Calu3 (cell line): ENCODE measurements at regions of chr6 and their contacts with region 1.

Region 1: DNA sequence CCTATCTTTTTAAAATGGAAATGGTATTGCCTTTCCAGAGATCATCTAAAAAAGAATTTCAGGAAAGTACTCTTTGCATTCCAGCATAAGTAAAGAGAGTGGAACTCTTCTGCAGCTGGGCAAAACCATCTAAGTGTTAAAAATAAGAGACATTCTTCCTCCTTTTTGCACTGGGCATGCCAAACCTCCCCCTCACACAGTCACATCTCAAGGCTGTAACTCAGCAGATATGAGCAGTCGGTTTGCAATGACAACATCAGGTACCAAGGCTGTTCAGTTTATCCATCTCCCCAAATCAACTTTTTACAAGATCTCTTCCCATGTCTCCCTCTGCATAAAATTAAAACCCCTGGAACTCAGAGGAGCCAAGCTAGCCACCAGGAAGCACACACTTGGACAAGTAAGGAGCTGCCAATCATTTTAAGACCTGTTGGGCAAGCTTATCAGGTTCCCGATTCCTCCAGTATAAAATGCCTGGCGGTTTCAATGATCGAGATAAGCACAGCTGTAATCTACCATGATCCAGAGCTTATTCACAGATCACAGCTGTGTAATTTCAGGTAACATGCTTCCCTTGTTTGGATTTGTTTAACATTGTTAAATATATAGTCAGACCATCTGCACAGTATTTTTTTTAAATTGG is 23.2 kb downstream of the ID4 start:
- DNase-seq: peak; percentile 82
- H3K4me3 Mint-ChIP-seq: peak overlapping the region; percentile 1
- H3K27ac Mint-ChIP-seq: peak overlapping the region; percentile 25
- H3K4me1 Mint-ChIP-seq: peaks cover 25% of the 10 kb centered on the region
- H3K27me3 Mint-ChIP-seq: no peaks in the 10 kb centered on the region
- CTCF ChIP-seq: no peak

Region 2: GRCh38 chr6:19804205-19805123 is 55.9 kb before region 1 on chr6:
- CTCF ChIA-PET with region 1: no interaction called
- intact Hi-C with region 1: loop called (anchors 1 kb)
- DNase-seq: peak; percentile 98
- H3K4me3 Mint-ChIP-seq: peak overlapping the region; percentile 82
- H3K27ac Mint-ChIP-seq: peak overlapping the region; percentile 89
- H3K4me1 Mint-ChIP-seq: peaks cover 43% of the 10 kb centered on the region
- H3K27me3 Mint-ChIP-seq: no peaks in the 10 kb centered on the region
- CTCF ChIP-seq: no peak

Region 3: GRCh38 chr6:19892260-19892659 is 31.9 kb after region 1 on chr6:
- CTCF ChIA-PET with region 1: interaction called, 3 read pairs
- intact Hi-C with region 1: loop called (anchors 2 kb)
- DNase-seq: peak; percentile 98
- H3K4me3 Mint-ChIP-seq: peak overlapping the region; percentile 19
- H3K27ac Mint-ChIP-seq: peak overlapping the region; percentile 73
- H3K4me1 Mint-ChIP-seq: peaks cover 23% of the 10 kb centered on the region
- H3K27me3 Mint-ChIP-seq: no peaks in the 10 kb centered on the region
- CTCF ChIP-seq: no peak